Left cardiac atrium (tissue), 4 donors: ENCODE measurements at regions of chr15 and their contacts with region 1.

Region 1: DNA sequence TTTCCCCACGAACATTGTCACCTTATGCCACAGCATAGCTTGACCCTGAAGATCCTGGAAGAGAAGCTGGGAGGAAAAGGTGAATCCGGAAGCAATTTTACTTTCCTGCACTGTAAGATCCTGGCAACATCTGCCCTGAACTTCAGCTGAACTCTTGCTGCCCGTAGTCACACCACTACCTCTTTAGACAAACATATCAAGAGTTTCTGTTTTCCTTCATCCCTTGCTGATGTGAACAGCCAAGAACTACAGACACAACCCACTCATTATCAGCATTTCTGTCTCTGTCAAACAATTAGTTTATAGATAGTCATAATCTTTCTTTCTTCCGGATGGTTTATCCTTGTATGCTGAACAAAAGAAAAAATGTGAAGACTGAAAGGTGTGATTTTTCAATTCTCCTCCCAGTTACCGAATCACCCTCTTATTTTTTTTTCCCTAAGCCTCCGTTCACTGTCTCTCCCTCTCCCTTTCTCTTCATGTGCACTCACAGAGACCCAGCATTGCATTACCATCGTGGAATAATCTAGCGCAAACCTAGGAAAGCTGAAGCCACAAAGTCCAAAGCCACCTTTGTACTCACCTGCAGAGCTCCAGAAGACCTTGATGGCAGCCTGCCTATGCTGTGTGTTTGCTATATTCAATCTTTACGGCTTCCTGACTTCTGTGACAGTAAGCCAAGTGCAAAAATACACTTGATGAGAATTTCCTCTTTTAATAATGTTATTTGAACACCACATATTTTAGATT is 229.2 kb downstream of the CDIN1 start:
- DNase-seq: no peak
- ATAC-seq: peak in 1 of 2 donors; percentile 37

Region 2: GRCh38 chr15:36742696-36743095 is 65.9 kb before region 1 on chr15:
- intact Hi-C with region 1: loop called in 1 of 2 experiments (anchors 10 kb)
- DNase-seq: no peak
- ATAC-seq: no peak